Pancreas (tissue), 10 donors: ENCODE measurements at regions of chr15 and their contacts with region 1.

Region 1: DNA sequence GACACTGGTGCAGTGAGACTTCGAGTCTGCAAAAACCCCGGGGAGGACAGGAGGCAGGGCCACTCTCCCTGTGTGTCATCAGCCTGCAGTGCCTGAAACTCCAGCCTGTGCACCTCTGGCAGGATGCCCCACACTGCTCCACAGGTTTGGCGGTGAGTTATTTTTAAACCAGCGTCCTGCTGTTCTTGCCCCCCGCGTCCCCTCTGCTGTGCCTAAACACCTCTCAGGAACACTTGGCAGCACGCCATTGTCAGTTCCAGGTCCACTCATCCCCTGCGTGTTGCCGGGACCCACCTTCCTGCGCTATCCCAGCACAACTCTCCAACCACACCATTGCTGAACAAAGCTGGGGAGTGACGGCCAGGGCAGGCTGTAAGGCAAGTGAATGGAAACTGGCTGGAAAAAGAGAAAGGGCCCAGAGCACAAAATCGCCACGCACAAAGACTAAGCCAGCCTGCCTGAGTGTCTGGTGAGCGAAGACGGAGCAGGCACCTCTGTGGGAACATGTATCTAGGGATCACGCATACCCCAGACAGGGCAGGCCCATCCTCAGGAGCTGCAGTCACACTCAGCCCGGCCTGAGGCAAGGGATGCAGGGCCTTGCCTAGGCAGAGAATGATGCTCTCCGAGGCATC is 3.1 kb upstream of the PLA2G4F start:
- DNase-seq: peak in 1 of 6 donors; percentile 67
- ATAC-seq: no peak
- H3K4me3 ChIP-seq: no peak overlapping the region
- H3K27ac ChIP-seq: no peak overlapping the region
- H3K4me1 ChIP-seq: peaks cover 3 to 12% (median 11%) of the 10 kb centered on the region in 3 donors
- H3K27me3 ChIP-seq: no peaks in the 10 kb centered on the region
- CTCF ChIP-seq: no peak

Region 2: DNA sequence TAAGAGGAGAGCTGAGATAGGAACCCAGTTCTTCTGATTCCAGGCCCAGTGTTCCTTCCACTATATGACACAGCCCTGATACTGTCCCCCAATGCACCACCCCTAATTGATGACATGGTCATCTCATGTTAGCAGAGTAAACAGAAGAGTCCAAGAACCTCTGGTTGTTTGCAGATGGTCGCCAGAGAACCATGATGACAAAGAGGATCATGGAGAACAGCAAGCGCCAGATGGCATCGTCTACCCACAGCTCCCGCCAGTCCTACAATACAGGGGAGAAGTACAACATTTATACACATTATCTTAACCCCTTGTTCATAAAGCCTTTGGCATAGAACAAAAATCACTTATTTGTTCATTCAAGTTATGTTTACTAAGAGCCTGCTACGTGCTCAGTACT is 67.2 kb after region 1 on chr15:
- intact Hi-C with region 1: loop called in 1 of 3 experiments (anchors 10 kb)
- DNase-seq: no peak
- ATAC-seq: peak in 2 of 4 donors; percentile 45 to 71
- H3K4me3 ChIP-seq: no peak overlapping the region
- H3K27ac ChIP-seq: no peak overlapping the region
- H3K4me1 ChIP-seq: no peaks in the 10 kb centered on the region
- H3K27me3 ChIP-seq: no peaks in the 10 kb centered on the region
- CTCF ChIP-seq: no peak